ENCODE measurements at regions of chr5 and their contacts with region 1.

Region 1: GRCh38 chr5:82165740-82166530 is 112.2 kb downstream of the RPS23 start:
- DNase-seq: peak in 32 of 35 experiments; percentile 1 to 71 (median 28)
- ATAC-seq: peak; percentile 86 to 94 (median 90)
- H3K4me3 ChIP-seq: no peak overlapping the region
- H3K4me3 Mint-ChIP-seq: no peak overlapping the region
- H3K27ac ChIP-seq: no peak overlapping the region
- H3K27ac Mint-ChIP-seq: no peak overlapping the region
- H3K4me1 ChIP-seq: no peaks in the 10 kb centered on the region
- H3K4me1 Mint-ChIP-seq: peaks cover 0 to 6% (median 0%) of the 10 kb centered on the region in 3 donors
- H3K27me3 ChIP-seq: no peaks in the 10 kb centered on the region
- H3K27me3 Mint-ChIP-seq: no peaks in the 10 kb centered on the region

Region 2: DNA sequence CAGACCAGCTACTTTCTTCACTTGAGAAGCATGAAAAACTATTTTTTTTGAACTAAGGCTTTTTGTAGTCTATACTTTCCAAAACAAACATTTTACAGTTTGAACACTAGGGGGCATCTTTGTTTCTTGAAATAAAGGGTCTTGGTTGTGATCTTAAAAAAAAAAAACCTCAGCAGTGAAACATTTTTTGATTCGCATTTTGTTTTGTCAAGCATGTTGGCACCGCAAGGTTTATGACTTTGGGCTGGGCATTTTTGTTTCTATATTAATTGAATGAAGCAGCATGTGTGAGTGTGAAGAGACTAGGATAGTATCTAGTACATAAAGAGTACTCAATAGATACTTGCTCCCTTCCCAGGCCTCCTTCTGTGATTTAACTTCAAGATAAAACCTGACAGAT is 740.4 kb before region 1 on chr5:
- CTCF ChIA-PET with region 1: interaction called, 5 to 28 read pairs
- POLR2A ChIA-PET with region 1: interaction called in 1 of 2 experiments, 3 read pairs
- DNase-seq: peak in 2 of 35 experiments; percentile 13 to 55
- ATAC-seq: peak in 3 of 4 experiments; percentile 30 to 64 (median 46)
- H3K4me3 ChIP-seq: no peak overlapping the region
- H3K4me3 Mint-ChIP-seq: no peak overlapping the region
- H3K27ac ChIP-seq: no peak overlapping the region
- H3K27ac Mint-ChIP-seq: peak overlapping the region in 1 of 2 donors; percentile 71
- H3K4me1 ChIP-seq: no peaks in the 10 kb centered on the region
- H3K4me1 Mint-ChIP-seq: peaks cover 11 to 12% (median 11%) of the 10 kb centered on the region in 3 donors
- H3K27me3 ChIP-seq: no peaks in the 10 kb centered on the region
- H3K27me3 Mint-ChIP-seq: no peaks in the 10 kb centered on the region

Region 3: GRCh38 chr5:81435023-81435422 is 730.9 kb before region 1 on chr5:
- CTCF ChIA-PET with region 1: interaction called in 1 of 2 experiments, 4 read pairs
- POLR2A ChIA-PET with region 1: interaction called in 1 of 2 experiments, 12 read pairs
- DNase-seq: no peak
- ATAC-seq: no peak
- H3K4me3 ChIP-seq: no peak overlapping the region
- H3K4me3 Mint-ChIP-seq: no peak overlapping the region
- H3K27ac ChIP-seq: no peak overlapping the region
- H3K27ac Mint-ChIP-seq: no peak overlapping the region
- H3K4me1 ChIP-seq: no peaks in the 10 kb centered on the region
- H3K4me1 Mint-ChIP-seq: no peaks in the 10 kb centered on the region
- H3K27me3 ChIP-seq: no peaks in the 10 kb centered on the region
- H3K27me3 Mint-ChIP-seq: no peaks in the 10 kb centered on the region

Region 4: GRCh38 chr5:81506900-81507588 is 658.9 kb before region 1 on chr5:
- CTCF ChIA-PET with region 1: interaction called, 3 to 37 read pairs
- POLR2A ChIA-PET with region 1: no interaction called
- DNase-seq: peak in 28 of 35 experiments; percentile 1 to 69 (median 18)
- ATAC-seq: peak; percentile 58 to 85 (median 66)
- H3K4me3 ChIP-seq: no peak overlapping the region
- H3K4me3 Mint-ChIP-seq: no peak overlapping the region
- H3K27ac ChIP-seq: no peak overlapping the region
- H3K27ac Mint-ChIP-seq: no peak overlapping the region
- H3K4me1 ChIP-seq: no peaks in the 10 kb centered on the region
- H3K4me1 Mint-ChIP-seq: peaks cover 0 to 2% (median 0%) of the 10 kb centered on the region in 3 donors
- H3K27me3 ChIP-seq: no peaks in the 10 kb centered on the region
- H3K27me3 Mint-ChIP-seq: no peaks in the 10 kb centered on the region

Region 5: DNA sequence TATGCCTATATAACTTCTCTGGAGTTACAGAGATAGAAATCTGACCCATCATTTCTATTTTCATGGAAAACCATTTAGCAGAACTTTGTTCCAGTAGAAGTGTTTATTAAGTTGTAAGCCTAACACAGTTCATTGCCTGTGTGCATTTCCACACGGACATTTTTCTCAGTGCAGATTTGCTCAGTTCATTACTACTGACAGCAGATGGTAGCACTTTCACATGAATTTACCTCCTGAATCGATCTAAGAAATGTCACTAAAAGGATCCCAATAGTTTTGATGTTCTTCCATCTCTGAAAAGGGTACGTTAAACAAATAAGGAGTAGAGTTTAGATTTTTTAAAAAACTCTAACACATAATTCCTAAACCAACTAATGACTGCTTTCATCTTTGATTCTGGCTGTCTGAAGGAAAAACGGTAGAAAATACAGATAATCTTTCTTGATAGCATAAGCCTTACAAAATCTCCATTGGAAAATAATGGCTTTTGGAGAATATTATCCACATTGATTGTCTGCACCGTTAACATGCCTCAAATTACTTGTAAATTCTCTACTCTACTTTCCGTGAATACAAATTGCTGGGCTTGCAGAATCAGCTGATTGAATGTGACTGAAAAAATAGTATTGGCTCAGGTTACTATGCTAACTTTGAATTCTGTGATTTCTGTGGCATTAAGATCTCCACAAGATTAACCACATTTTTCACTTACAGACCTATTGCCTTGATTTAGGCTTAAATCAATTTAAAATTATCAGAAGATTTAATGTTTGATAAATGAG is 79.1 kb after region 1 on chr5:
- CTCF ChIA-PET with region 1: no interaction called
- POLR2A ChIA-PET with region 1: no interaction called
- DNase-seq: no peak
- ATAC-seq: no peak
- H3K4me3 ChIP-seq: no peak overlapping the region
- H3K4me3 Mint-ChIP-seq: no peak overlapping the region
- H3K27ac ChIP-seq: no peak overlapping the region
- H3K27ac Mint-ChIP-seq: no peak overlapping the region
- H3K4me1 ChIP-seq: no peaks in the 10 kb centered on the region
- H3K4me1 Mint-ChIP-seq: no peaks in the 10 kb centered on the region
- H3K27me3 ChIP-seq: no peaks in the 10 kb centered on the region
- H3K27me3 Mint-ChIP-seq: no peaks in the 10 kb centered on the region